T-cell (primary cell): ENCODE measurements at regions of chr13 and their contacts with region 1.

Region 1: GRCh38 chr13:57569986-57570385 is 61.6 kb upstream of the PCDH17 start:
- DNase-seq: no peak
- ATAC-seq: no peak
- H3K4me3 ChIP-seq: no peak overlapping the region
- H3K4me3 Mint-ChIP-seq: no peak overlapping the region
- H3K27ac ChIP-seq: no peak overlapping the region
- H3K27ac Mint-ChIP-seq: no peak overlapping the region
- H3K4me1 ChIP-seq: no peaks in the 10 kb centered on the region
- H3K4me1 Mint-ChIP-seq: no peaks in the 10 kb centered on the region
- H3K27me3 ChIP-seq: no peaks in the 10 kb centered on the region
- H3K27me3 Mint-ChIP-seq: no peaks in the 10 kb centered on the region

Region 2: DNA sequence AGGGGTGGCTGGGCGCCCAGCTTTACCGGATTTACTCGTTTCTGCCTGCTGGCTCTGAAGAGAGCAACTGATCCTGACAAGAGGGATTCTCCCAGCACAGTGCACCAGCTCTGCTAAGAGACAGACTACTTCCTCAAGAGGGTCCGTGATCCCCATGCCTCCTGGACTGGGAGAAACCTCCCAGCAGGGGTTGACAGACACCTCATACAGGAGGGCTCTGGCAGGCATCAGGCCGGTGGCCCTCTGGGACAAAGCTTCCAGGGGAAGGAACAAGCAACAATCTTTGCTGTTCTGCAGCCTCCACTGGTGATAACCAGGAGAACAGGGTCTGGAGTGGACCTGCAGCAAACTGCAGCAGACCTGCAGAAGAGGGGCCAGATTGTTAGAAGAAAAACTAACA is 1621.8 kb before region 1 on chr13:
- CTCF ChIA-PET with region 1: no interaction called
- POLR2A ChIA-PET with region 1: no interaction called
- DNase-seq: no peak
- ATAC-seq: no peak
- H3K4me3 ChIP-seq: no peak overlapping the region
- H3K4me3 Mint-ChIP-seq: no peak overlapping the region
- H3K27ac ChIP-seq: no peak overlapping the region
- H3K27ac Mint-ChIP-seq: no peak overlapping the region
- H3K4me1 ChIP-seq: no peaks in the 10 kb centered on the region
- H3K4me1 Mint-ChIP-seq: no peaks in the 10 kb centered on the region
- H3K27me3 ChIP-seq: no peaks in the 10 kb centered on the region
- H3K27me3 Mint-ChIP-seq: no peaks in the 10 kb centered on the region

Region 3: DNA sequence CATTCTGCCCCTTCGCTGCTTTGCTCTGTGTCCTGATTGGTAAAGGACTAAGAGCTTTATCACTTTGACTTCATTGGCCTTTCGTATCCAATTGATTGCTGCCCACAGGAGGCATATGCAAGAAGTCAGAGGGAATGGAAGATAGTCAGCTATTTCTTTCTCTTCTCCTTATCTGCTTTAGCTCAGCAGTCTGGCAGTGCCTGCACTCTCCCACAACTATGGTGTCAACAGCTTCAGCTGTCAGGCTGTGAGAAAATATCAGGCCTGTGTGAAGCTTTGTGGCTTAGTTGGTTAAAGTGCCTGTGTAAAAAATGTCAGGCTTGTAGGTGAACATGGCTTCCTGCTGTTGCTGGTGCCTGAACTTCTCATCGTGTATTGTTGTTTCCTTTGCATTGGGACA is 304.5 kb after region 1 on chr13:
- CTCF ChIA-PET with region 1: no interaction called
- POLR2A ChIA-PET with region 1: interaction called in 1 of 2 experiments, 11 read pairs
- DNase-seq: no peak
- ATAC-seq: no peak
- H3K4me3 ChIP-seq: no peak overlapping the region
- H3K4me3 Mint-ChIP-seq: no peak overlapping the region
- H3K27ac ChIP-seq: no peak overlapping the region
- H3K27ac Mint-ChIP-seq: no peak overlapping the region
- H3K4me1 ChIP-seq: no peaks in the 10 kb centered on the region
- H3K4me1 Mint-ChIP-seq: no peaks in the 10 kb centered on the region
- H3K27me3 ChIP-seq: no peaks in the 10 kb centered on the region
- H3K27me3 Mint-ChIP-seq: no peaks in the 10 kb centered on the region